CD14-positive monocyte (primary cell): ENCODE measurements at regions of chr20 and their contacts with region 1.

Region 1: DNA sequence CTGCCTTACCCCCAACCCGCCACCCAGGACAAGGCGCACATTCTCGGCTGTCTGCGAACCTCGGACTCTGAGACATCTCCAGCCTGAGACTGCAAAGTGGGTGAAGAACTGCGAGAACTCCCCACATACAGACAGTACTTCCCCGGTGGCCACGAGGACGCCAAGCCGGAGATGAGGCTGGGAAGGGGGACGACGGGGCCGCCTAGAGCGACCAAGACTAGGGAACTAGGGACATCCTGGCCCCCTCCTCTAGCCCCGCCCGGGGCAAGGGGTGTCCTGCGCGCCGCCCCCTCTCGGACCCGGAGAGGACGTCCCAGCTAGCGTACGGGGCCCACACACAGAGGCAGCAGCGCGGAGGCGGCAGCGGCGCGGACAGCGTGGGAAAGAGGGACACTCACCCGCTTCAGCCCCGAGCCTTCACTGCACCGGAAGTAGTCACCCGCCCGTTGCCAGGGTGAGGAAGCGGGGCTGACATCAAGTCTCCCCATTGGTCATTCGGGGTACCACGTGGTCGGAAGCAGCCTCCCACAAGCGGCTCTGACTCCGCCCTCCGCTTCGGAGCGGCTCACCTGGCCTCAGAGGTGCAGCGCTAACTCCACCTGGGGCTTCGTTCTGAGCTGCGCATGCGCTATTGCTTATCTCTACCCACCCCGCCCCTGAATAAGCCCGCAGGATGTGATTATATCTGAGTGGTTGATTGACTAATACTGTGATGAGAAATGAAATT is at the start of gene TASP1:
- DNase-seq: peak; percentile 91 to 95 (median 91)
- H3K4me3 ChIP-seq: peak within 1 kb of the TSS; percentile 76 to 100 (median 77)
- H3K4me3 Mint-ChIP-seq: peak within 1 kb of the TSS; percentile 98 to 99
- H3K27ac ChIP-seq: peak within 1 kb of the TSS; percentile 74 to 84
- H3K27ac Mint-ChIP-seq: peak within 1 kb of the TSS; percentile 85 to 96 (median 91)
- H3K4me1 ChIP-seq: peaks cover 8 to 17% of the 10 kb centered on the region in 2 donors
- H3K4me1 Mint-ChIP-seq: peaks cover 16% of the 10 kb centered on the region
- H3K27me3 ChIP-seq: no peaks in the 10 kb centered on the region
- H3K27me3 Mint-ChIP-seq: peaks cover 2 to 13% (median 5%) of the 10 kb centered on the region in 3 donors
- CTCF ChIP-seq: no peak
- polyA plus RNA-seq, gene TASP1: 2.3 to 3.3 (median 2.6) TPM

Region 2: DNA sequence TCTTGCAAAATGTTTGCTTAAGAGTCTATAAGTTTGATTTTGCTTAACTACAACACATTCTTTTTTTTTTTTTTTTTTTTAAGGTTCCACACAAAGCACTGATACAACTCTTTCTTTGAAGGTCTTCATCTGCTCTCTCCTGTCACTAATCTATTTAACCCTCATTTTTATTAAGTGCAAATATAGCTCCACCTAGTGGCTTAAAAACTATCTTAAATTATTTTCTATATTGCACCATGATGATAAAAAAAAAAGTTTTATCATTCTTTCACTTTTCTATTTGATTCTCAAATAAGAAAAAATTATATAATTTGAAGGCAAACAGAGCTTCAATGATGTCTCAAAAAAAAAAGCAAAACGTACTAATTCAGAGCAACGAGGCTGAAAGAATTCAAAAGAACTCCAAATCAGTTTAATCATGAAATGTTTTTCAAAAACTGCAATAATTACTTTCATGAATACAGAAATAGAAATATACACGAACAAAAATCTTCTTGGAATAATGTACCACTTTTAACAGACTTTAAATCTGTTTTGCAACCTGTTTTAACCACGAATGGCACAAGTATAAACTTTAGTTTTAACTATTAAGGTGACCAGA is 133.3 kb after region 1 on chr20:
- intact Hi-C with region 1: no loop called
- DNase-seq: peak in 1 of 3 donors; percentile 24
- H3K4me3 ChIP-seq: no peak overlapping the region
- H3K4me3 Mint-ChIP-seq: no peak overlapping the region
- H3K27ac ChIP-seq: no peak overlapping the region
- H3K27ac Mint-ChIP-seq: no peak overlapping the region
- H3K4me1 ChIP-seq: no peaks in the 10 kb centered on the region
- H3K4me1 Mint-ChIP-seq: peaks cover under 1% of the 10 kb centered on the region
- H3K27me3 ChIP-seq: no peaks in the 10 kb centered on the region
- H3K27me3 Mint-ChIP-seq: no peaks in the 10 kb centered on the region
- CTCF ChIP-seq: peak; percentile 79

Region 3: DNA sequence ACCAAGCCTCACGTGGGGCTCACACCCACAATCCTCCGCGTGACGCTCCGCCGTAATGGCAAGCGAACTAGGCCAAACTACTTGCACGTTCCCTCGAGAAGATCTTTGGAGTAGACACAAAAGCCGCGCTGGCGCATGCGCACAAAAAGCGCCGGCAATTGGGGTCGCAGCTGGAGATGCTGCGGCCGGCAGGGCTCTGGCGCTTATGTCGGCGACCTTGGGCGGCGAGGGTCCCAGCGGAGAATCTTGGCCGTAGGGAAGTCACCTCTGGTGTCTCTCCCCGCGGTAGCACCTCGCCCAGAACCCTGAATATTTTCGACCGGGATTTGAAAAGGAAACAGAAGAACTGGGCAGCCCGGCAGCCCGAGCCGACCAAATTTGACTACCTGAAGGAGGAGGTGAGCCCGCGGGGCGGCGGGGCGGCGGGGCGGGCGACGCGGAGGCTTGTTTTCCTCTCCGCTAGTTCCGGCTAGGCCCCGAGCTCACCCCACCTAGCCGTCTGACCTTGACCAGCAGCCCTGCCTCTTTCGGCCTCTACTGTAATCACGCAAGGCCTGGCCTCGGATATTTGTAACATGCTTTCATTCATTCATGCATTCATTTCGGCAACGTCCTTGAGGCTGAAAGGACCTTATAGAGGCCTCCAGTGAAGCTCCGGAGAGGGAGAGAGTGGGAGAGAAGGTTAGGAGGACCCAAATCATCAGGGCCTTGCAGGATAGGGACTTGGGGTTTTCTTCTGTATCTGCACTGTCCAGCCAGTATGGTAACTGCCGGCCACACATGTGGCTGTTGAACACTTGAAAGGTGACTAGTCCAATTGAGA is 146.4 kb after region 1 on chr20 and contains the starts of genes ESF1 and NDUFAF5:
- intact Hi-C with region 1: loop called in 1 of 2 experiments (anchors 10 kb)
- DNase-seq: peak; percentile 88 to 91 (median 88)
- H3K4me3 ChIP-seq: peak within 1 kb of the TSS; percentile 66 to 94 (median 88)
- H3K4me3 Mint-ChIP-seq: peak within 1 kb of the TSS; percentile 97 to 99
- H3K27ac ChIP-seq: peak within 1 kb of the TSS; percentile 79 to 93
- H3K27ac Mint-ChIP-seq: peak within 1 kb of the TSS; percentile 93 to 98 (median 97)
- H3K4me1 ChIP-seq: peaks cover 22 to 33% of the 10 kb centered on the region in 2 donors
- H3K4me1 Mint-ChIP-seq: peaks cover 34% of the 10 kb centered on the region
- H3K27me3 ChIP-seq: no peaks in the 10 kb centered on the region
- H3K27me3 Mint-ChIP-seq: peaks cover 0 to 4% (median 0%) of the 10 kb centered on the region in 3 donors
- CTCF ChIP-seq: no peak
- polyA plus RNA-seq, gene ESF1: 0.73 to 2.3 (median 1.7) TPM
- polyA plus RNA-seq, gene NDUFAF5: 5.9 to 15.2 (median 7.8) TPM